Activated CD4-positive, alpha-beta T cell treated with anti-CD3 and anti-CD28 coated beads, Interleukin-2, amount 10 ng/mL, durations not matched to agents 24 days and 14 days (primary cell): ENCODE measurements at regions of chr17 and their contacts with region 1.

Region 1: GRCh38 chr17:68019675-68020408 is 15.7 kb upstream of the KPNA2 start:
- DNase-seq: peak; percentile 99
- H3K4me3 Mint-ChIP-seq: peak overlapping the region; percentile 82
- H3K27ac Mint-ChIP-seq: peak overlapping the region; percentile 90
- H3K4me1 Mint-ChIP-seq: peaks cover 14% of the 10 kb centered on the region
- H3K27me3 Mint-ChIP-seq: peaks cover 9% of the 10 kb centered on the region

Region 2: DNA sequence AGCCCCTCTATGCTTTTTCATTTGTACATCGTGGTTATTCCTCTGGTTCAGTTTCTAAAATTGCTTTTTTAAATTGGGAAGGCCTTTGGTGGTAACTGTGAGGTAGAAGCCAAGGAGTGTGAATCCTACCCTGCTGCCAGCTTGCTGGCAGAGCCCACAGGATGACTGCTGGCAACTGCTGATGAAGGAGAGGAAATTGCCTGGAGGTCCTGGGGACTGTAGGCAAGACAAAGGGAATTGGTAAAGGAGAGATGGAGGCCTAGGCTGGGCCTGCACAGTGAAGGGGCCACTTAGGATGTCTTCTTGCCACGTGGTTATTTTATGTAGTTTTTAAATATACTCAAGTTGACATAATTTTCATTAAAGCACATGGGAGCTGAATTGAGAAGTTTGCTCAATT is 39.4 kb before region 1 on chr17:
- intact Hi-C with region 1: no loop called
- DNase-seq: no peak
- H3K4me3 Mint-ChIP-seq: no peak overlapping the region
- H3K27ac Mint-ChIP-seq: peak overlapping the region; percentile 66
- H3K4me1 Mint-ChIP-seq: no peaks in the 10 kb centered on the region
- H3K27me3 Mint-ChIP-seq: no peaks in the 10 kb centered on the region

Region 3: GRCh38 chr17:67993596-67994361 is 26.1 kb before region 1 on chr17:
- intact Hi-C with region 1: loop called (anchors 1 kb)
- DNase-seq: peak; percentile 92
- H3K4me3 Mint-ChIP-seq: peak overlapping the region; percentile 82
- H3K27ac Mint-ChIP-seq: peak overlapping the region; percentile 89
- H3K4me1 Mint-ChIP-seq: peaks cover 35% of the 10 kb centered on the region
- H3K27me3 Mint-ChIP-seq: peaks cover 28% of the 10 kb centered on the region